ENCODE measurements at regions of chr3 and their contacts with region 1.

Region 1: GRCh38 chr3:101381809-101382208 is 61.4 kb upstream of the IMPG2 start:
- DNase-seq: peak; percentile 40
- H3K4me3 ChIP-seq: no peak overlapping the region
- H3K27ac ChIP-seq: no peak overlapping the region
- H3K4me1 ChIP-seq: no peaks in the 10 kb centered on the region
- H3K27me3 ChIP-seq: no peaks in the 10 kb centered on the region
- CTCF ChIP-seq: peak; percentile 7 to 11
- POLR2A ChIP-seq: no peak

Region 2: DNA sequence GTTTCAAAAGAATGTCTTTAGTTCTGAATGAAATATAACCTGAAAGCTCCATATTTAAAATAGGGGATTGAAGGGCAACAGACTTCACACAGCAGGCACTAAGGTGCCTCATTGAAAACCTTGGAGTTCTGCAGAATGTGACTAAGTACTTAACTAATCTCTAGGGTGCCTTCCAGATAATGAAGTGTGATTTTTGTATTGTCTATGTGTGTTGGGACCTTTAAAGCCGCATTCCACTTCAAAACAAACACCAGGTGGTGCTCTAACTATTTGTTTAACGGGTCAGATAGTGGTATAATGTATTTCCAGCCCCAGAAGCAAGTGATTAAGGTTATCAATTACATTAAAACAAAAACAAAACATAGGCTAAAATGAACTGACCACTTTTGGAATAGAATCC is 644.5 kb before region 1 on chr3:
- CTCF ChIA-PET with region 1: interaction called, 13 read pairs
- POLR2A ChIA-PET with region 1: no interaction called
- dilution Hi-C with region 1: no loop called
- intact Hi-C with region 1: loop called (anchors 2 kb)
- DNase-seq: peak; percentile 48
- H3K4me3 ChIP-seq: no peak overlapping the region
- H3K27ac ChIP-seq: no peak overlapping the region
- H3K4me1 ChIP-seq: no peaks in the 10 kb centered on the region
- H3K27me3 ChIP-seq: no peaks in the 10 kb centered on the region
- CTCF ChIP-seq: peak; percentile 19 to 36
- POLR2A ChIP-seq: no peak

Region 3: DNA sequence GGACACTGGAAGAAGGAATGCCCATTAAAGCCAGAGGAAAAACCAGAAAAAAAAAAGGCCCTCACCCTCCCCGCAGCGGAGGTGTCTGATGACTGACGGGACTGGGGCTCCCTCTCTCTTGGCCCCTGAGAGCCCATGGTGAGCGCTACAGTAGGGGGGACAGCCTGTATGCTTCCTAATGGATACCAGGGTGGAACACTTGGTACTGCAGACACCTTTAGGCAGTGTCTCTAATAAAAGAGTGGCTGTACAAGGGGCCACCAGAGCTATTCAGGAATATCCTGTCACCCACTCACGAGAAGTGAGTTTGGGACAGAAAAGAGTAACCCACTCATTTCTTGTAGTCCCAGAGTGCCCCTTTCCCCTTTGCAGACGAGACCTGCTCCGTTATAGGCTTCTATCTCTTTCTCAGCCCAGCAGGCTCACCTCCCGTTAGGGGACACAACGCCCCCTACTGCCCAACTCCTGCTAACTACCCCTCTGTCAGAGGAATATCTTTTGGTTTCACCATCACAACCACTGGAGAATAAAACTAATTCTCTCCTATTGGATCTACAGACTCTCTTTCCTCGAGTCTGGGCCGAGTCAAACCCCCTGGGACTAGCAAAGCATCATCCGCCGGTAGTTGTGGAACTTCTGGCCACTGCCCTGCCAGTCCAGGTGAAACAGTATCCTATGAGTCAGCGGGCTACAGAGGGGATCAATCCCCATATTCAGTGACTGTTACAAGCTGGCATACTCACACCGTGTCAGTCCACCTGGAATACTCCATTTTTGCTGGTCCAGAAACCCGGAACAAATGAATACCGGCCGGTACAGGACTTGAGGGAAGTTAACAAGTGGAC is 254.4 kb after region 1 on chr3:
- CTCF ChIA-PET with region 1: no interaction called
- POLR2A ChIA-PET with region 1: no interaction called
- dilution Hi-C with region 1: no loop called
- intact Hi-C with region 1: loop called (anchors 5 kb)
- DNase-seq: peak; percentile 60
- H3K4me3 ChIP-seq: no peak overlapping the region
- H3K27ac ChIP-seq: no peak overlapping the region
- H3K4me1 ChIP-seq: no peaks in the 10 kb centered on the region
- H3K27me3 ChIP-seq: no peaks in the 10 kb centered on the region
- CTCF ChIP-seq: peak; percentile 69 to 71
- POLR2A ChIP-seq: no peak

Measured in endothelial cell of umbilical vein (primary cell).